ENCODE measurements at regions of chr2 and their contacts with region 1.

Region 1: DNA sequence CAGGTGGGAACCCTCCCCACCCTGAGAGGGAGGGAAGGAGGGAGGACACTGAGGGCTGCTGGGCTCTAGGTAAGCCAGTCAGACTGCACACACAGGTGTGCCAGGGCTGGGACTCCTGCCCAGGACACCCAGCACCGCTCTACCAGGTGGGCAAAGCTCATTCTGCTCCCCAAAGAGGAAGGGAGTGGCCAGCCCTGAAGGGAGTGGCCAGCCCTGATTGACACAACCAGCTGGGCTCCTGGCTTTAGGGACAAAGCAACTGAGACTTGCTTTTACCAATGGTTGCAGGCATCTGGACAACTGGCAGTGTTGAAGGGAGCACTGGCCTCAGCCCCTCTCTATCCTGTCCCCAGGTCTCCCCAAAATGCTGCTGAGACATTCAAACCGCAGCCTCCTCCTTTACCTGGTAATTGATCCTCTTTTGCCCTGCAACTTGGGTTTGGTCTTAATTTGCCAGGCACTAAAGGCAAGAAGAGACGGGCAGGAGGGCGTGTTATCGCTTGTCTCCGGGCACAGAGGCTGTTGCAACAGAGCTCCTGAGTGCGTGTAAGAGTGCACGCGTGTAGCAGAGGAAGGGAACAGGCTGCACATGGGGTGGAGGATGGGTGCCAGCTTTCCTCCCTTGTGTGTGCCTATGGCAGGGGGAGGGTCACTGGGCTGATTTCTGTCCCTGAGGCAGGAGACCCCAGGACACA is 14.5 kb upstream of the FOSL2 start:
- DNase-seq: no peak
- H3K4me3 Mint-ChIP-seq: no peak overlapping the region
- H3K27ac Mint-ChIP-seq: peak overlapping the region; percentile 7
- H3K4me1 Mint-ChIP-seq: peaks cover 46% of the 10 kb centered on the region
- H3K27me3 Mint-ChIP-seq: peaks cover 7% of the 10 kb centered on the region

Region 2: DNA sequence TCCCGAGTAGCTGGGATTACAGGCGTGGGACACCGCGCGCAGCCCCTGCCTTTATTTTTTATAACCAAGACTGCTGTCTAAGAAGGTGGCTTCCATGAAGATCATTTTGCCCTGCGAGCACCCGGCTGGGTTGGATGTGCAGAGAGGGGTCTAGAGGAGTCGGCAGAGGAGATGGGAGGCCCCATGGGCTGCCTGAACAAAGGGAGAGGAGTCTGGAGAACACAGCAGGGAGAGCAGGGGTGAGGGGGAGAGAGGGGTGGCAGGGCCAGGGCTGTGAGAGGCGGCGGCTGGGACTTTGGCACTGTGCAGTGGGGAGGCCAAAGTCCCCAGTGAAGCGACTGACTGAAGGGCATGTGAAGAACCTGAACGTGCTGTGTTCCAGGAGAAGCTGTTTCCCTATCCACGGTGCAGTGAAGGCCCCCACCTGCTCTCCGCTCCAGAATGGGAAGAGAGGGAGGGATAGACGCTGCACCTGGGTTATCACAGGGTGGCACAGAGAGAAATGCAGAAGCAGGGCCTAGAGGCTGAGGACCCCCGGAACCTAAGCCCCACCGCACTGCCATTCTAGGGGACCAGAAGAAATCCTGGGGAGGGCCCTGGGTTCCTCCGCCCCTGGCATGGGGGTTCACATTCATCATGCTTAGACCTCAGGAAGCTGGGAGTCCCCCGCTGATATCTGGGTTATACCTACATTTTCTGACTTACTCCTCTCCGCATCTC is 10.3 kb before region 1 on chr2:
- CTCF ChIA-PET with region 1: interaction called, 11 read pairs
- POLR2A ChIA-PET with region 1: interaction called, 3 read pairs
- DNase-seq: no peak
- H3K4me3 Mint-ChIP-seq: no peak overlapping the region
- H3K27ac Mint-ChIP-seq: peak overlapping the region; percentile 84
- H3K4me1 Mint-ChIP-seq: peaks cover 57% of the 10 kb centered on the region
- H3K27me3 Mint-ChIP-seq: peaks cover 10% of the 10 kb centered on the region

Region 3: GRCh38 chr2:28391564-28392296 is 13.6 kb after region 1 on chr2:
- CTCF ChIA-PET with region 1: interaction called, 21 read pairs
- POLR2A ChIA-PET with region 1: no interaction called
- DNase-seq: peak; percentile 79
- H3K4me3 Mint-ChIP-seq: peak overlapping the region; percentile 81
- H3K27ac Mint-ChIP-seq: peak overlapping the region; percentile 96
- H3K4me1 Mint-ChIP-seq: peaks cover 37% of the 10 kb centered on the region
- H3K27me3 Mint-ChIP-seq: peaks cover 2% of the 10 kb centered on the region